ENCODE measurements at regions of chr5 and their contacts with region 1.

Region 1: DNA sequence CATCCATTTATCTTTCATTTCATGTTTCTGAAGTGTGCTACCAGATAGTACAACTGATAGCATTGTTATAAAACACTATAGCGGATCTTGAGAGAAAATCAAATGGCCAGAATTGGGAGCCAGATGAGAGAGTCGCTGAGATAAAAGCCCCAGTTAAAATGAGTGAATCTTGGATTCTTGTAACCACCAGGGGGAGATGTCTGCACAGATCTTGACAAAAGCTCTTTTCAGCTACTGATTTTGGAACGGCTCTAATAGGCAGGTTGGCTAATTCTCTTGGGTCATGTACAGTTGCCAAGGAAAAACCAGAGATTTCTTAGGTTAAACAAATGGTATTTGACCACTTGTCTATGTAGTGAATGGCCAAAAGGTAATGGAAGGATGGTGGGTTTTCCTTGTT is 21.7 kb downstream of the F2RL2 start:
- DNase-seq: peak; percentile 69
- ATAC-seq: peak; percentile 67
- H3K4me3 ChIP-seq: no peak overlapping the region
- H3K27ac ChIP-seq: no peak overlapping the region
- H3K4me1 ChIP-seq: peaks cover 7% of the 10 kb centered on the region
- H3K27me3 ChIP-seq: no peaks in the 10 kb centered on the region
- CTCF ChIP-seq: peak; percentile 75

Region 2: DNA sequence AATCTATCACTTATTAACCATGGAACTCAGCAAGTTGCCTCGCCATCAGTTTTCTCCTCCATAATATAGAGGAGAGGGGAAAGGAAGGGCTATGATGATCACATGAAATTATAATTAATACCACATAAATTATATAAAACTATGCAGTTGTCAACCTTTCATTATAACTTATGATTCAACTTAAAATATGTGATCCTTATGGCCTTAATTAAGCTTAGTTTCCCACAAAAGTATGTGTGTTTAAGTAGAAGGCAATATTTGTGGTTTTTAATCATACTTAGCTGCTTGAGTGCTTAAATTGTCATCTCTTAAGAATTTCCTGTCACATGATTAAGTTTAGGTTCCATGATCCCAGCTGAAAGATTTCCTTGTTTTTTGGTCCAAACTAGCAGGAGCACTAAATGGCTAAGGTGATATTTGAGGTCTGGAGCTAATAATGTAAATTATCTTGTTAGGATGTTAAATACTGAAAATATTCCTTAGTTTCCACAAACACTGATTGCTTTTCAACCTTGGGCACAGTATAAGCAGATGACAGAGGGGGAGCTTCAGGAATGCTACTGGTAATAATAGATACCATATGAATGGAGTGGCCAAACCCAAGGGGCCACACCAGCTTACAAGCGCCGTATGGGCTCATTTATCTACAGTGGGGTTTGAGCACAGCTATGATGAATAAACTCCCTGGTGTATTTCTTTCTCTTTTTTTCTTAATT is 88.0 kb after region 1 on chr5:
- CTCF ChIA-PET with region 1: no interaction called
- POLR2A ChIA-PET with region 1: no interaction called
- intact Hi-C with region 1: loop called (anchors 5 kb)
- DNase-seq: peak; percentile 77
- ATAC-seq: peak; percentile 45
- H3K4me3 ChIP-seq: no peak overlapping the region
- H3K27ac ChIP-seq: peak overlapping the region; percentile 73
- H3K4me1 ChIP-seq: peaks cover 39% of the 10 kb centered on the region
- H3K27me3 ChIP-seq: no peaks in the 10 kb centered on the region
- CTCF ChIP-seq: no peak

Region 3: DNA sequence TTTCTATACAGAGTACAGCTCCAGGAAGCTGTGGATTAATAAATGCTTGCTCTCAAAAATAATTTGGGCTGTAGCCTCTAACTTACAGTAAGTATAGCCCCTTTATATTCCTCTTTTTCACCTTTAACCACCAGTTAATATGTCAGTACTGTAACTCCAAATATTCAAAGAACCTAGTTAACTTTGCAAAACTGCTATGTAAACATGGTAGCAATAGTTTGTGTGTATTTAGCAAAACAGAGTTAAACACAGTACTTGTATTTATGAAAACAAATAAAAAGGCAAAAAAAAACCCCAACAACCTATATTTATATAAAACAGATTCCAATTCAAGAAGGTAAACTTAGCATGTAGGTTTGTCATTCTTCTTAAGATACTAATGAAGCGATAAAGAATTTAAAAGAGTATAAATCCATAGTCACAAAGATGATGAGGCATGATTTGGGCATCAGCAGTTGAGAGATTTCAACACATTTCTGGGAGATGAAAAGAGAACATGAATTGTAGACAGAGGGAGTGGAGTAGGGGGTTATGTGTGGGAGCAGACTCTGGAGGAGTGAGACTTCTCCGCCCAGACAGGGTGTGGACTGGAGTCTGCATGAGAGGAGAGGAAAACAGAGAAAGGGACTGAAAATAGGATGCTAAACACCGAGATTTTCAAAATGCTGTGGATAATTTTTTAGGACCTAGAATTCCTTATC is 170.4 kb after region 1 on chr5:
- CTCF ChIA-PET with region 1: interaction called, 23 read pairs
- POLR2A ChIA-PET with region 1: interaction called, 5 read pairs
- intact Hi-C with region 1: loop called (anchors 1 kb)
- DNase-seq: no peak
- ATAC-seq: peak; percentile 27; the same call in 1 of the 2 replicates
- H3K4me3 ChIP-seq: no peak overlapping the region
- H3K27ac ChIP-seq: no peak overlapping the region
- H3K4me1 ChIP-seq: 0 out of 2 replicates have a peak, but pooled peaks cover 5% of the 10 kb centered on the region
- H3K27me3 ChIP-seq: no peaks in the 10 kb centered on the region
- CTCF ChIP-seq: no peak

Region 4: DNA sequence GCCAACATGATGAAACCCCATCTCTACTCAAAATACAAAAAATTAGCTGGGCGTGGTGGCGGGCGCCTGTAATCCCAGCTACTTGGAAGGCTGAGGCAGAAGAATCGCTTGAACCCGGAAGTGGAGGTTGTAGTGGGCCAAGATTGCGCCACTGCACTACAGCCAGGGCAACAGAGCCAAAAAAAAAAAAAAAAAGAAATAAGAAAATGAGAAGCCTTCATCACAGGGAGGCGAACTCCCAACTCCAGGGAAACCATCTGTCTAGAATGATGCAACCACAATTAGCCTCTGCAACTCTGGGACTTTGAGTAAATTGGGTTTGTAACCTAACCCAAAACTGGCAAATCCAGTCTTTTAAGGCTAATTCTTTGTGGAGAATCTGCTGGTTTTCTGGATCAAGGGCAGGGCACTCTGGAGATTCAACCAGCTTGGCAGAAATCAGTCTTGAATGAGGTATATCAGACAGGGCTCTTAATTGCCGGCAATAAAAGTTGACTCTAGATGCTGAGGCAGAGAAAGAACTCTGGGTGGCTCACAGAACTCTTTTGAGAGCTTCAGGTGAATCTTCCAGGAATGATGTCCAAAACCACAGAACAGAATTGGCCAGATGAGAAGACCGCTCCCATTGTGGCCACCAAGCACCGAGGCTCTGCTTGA is 258.2 kb after region 1 on chr5:
- CTCF ChIA-PET with region 1: no interaction called
- POLR2A ChIA-PET with region 1: no interaction called
- intact Hi-C with region 1: loop called (anchors 2 kb)
- DNase-seq: no peak
- ATAC-seq: no peak
- H3K4me3 ChIP-seq: no peak overlapping the region
- H3K27ac ChIP-seq: no peak overlapping the region
- H3K4me1 ChIP-seq: peaks cover 7% of the 10 kb centered on the region; the same call in 1 of the 2 replicates
- H3K27me3 ChIP-seq: no peaks in the 10 kb centered on the region
- CTCF ChIP-seq: no peak

Measured in PC-3 (cell line).